Mammary epithelial cell (primary cell): ENCODE measurements at regions of chr3 and their contacts with region 1.

Region 1: GRCh38 chr3:38496131-38496910 is at the start of gene EXOG:
- DNase-seq: peak; percentile 85
- H3K4me3 ChIP-seq: peak within 1 kb of the TSS; percentile 79 to 89 (median 81)
- H3K27ac ChIP-seq: peak within 1 kb of the TSS; percentile 63
- H3K4me1 ChIP-seq: no peaks in the 10 kb centered on the region
- H3K27me3 ChIP-seq: no peaks in the 10 kb centered on the region
- CTCF ChIP-seq: peak; percentile 49 to 90
- total RNA-seq, gene EXOG: 8.0 to 19.9 TPM

Region 2: GRCh38 chr3:37627951-37628620 is 868.2 kb before region 1 on chr3:
- CTCF ChIA-PET with region 1: no interaction called
- dilution Hi-C with region 1: no loop called
- in situ Hi-C with region 1: no loop called
- intact Hi-C with region 1: no loop called
- DNase-seq: no peak
- H3K4me3 ChIP-seq: no peak overlapping the region
- H3K27ac ChIP-seq: no peak overlapping the region
- H3K4me1 ChIP-seq: peaks cover 9% of the 10 kb centered on the region
- H3K27me3 ChIP-seq: no peaks in the 10 kb centered on the region
- CTCF ChIP-seq: no peak

Region 3: DNA sequence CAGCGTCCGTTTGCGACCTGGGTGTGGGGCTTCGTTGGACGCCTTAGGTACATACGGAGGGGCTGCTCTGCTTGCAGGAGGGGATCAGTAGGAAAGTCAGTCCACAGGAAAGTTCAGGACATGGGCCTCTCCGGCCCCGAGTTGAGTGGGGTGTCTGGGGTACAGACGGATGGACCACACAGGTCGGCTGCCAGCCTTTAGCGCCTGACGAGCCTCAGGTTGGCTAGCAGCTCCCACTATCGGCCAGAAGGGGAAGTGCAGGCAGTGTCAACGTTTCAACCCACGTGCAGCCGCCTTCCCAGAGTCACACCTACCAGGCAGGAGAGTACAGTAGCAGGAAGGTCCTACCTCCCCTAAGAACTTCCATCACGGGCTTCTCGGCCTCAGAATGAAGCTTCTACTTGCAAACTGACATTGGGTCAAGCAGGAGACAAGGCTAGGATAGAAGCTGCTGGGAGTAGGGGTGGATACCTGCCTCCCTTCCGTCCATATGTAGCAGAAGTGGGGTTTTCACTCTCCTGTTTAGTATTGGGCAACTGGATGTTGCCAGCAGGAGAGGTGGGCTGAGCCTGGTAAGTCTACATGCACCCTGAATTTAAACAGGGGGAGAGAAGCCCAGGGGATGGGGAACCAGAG is 155.0 kb after region 1 on chr3:
- CTCF ChIA-PET with region 1: no interaction called
- dilution Hi-C with region 1: loop called (anchors 5 kb)
- in situ Hi-C with region 1: no loop called
- intact Hi-C with region 1: loop called (anchors 1 kb)
- DNase-seq: peak; percentile 45
- H3K4me3 ChIP-seq: no peak overlapping the region
- H3K27ac ChIP-seq: no peak overlapping the region
- H3K4me1 ChIP-seq: peaks cover 6% of the 10 kb centered on the region
- H3K27me3 ChIP-seq: peaks cover 9% of the 10 kb centered on the region
- CTCF ChIP-seq: peak; percentile 98 to 99

Region 4: DNA sequence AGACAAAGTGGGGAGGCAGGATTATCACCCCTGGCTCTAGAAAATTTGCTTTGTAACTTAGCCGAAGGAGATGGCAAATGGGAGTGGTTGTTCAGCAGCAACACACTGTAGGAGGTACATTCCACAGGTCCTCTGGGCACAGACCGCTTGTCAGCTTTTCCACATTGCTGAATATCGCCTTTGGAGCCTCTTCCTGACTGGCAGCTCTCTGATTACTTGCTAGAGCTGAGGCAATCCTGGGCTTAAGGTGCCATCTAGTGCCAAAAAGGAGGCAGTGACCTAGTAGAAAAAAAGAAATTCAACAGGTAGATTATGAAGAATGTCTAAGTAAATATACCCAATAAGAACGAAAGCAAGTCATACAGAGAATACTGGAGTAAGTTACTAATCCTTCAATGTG is 166.2 kb after region 1 on chr3:
- CTCF ChIA-PET with region 1: interaction called, 3 read pairs
- dilution Hi-C with region 1: no loop called
- in situ Hi-C with region 1: no loop called
- intact Hi-C with region 1: loop called (anchors 1 kb)
- DNase-seq: peak; percentile 57
- H3K4me3 ChIP-seq: no peak overlapping the region
- H3K27ac ChIP-seq: no peak overlapping the region
- H3K4me1 ChIP-seq: peaks cover 11% of the 10 kb centered on the region
- H3K27me3 ChIP-seq: no peaks in the 10 kb centered on the region
- CTCF ChIP-seq: peak; percentile 72 to 84

Region 5: GRCh38 chr3:39025222-39025970 is 529.1 kb after region 1 on chr3:
- CTCF ChIA-PET with region 1: no interaction called
- dilution Hi-C with region 1: no loop called
- in situ Hi-C with region 1: loop called in 1 of 2 experiments (anchors 25 kb)
- intact Hi-C with region 1: loop called (anchors 2 kb)
- DNase-seq: no peak
- H3K4me3 ChIP-seq: no peak overlapping the region
- H3K27ac ChIP-seq: no peak overlapping the region
- H3K4me1 ChIP-seq: peaks cover 9% of the 10 kb centered on the region
- H3K27me3 ChIP-seq: peaks cover 7% of the 10 kb centered on the region
- CTCF ChIP-seq: no peak

Region 6: DNA sequence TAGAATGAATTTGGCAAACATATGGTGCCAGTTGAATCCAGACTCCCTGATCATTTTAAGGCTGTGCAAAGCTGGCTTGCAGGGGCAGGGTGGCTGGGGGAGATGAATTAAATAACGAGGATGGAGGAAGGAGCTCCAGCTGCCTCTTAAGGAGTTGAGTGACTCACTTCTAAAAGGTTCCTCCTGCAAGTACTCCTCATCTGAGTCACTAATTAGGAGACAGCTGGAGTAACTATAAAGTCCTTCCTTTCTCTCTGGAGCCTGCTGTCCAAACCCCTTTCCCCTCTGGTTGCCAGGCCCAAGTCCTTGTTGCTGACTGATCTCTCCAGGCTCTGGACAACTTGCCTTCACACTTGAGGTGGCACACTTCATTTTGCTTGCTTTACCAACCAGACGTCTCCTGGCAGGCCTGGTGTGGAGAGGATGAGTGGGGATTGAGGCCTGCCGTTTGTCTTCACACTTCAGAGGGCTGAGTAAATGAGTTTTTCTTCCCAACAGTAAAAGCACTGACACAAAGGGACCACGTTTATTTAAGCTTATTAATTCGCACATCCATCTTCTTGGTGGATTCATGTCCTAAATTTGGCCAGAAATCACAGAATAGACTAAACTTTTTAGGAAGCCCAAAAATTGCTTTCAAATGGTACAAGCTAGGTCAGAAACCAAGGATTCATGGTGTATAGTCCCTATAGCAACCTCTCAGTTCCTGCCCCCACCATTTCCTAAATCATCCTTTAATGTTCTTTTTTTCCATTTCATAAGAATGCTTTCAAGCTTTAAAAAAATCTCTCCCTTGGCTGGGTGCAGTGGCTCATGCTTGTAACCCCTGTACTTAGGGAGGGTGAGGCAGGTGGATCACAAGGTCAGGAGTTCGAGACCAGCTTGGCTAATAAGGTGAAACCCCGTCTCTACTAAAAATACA is 1222.6 kb after region 1 on chr3:
- CTCF ChIA-PET with region 1: interaction called, 13 read pairs
- dilution Hi-C with region 1: no loop called
- in situ Hi-C with region 1: no loop called
- intact Hi-C with region 1: no loop called
- DNase-seq: peak; percentile 16
- H3K4me3 ChIP-seq: no peak overlapping the region
- H3K27ac ChIP-seq: no peak overlapping the region
- H3K4me1 ChIP-seq: no peaks in the 10 kb centered on the region
- H3K27me3 ChIP-seq: no peaks in the 10 kb centered on the region
- CTCF ChIP-seq: no peak